Activated CD4-positive, alpha-beta T cell treated with anti-CD3 and anti-CD28 coated beads for 36 hours (primary cell): ENCODE measurements at regions of chr12 and their contacts with region 1.

Region 1: DNA sequence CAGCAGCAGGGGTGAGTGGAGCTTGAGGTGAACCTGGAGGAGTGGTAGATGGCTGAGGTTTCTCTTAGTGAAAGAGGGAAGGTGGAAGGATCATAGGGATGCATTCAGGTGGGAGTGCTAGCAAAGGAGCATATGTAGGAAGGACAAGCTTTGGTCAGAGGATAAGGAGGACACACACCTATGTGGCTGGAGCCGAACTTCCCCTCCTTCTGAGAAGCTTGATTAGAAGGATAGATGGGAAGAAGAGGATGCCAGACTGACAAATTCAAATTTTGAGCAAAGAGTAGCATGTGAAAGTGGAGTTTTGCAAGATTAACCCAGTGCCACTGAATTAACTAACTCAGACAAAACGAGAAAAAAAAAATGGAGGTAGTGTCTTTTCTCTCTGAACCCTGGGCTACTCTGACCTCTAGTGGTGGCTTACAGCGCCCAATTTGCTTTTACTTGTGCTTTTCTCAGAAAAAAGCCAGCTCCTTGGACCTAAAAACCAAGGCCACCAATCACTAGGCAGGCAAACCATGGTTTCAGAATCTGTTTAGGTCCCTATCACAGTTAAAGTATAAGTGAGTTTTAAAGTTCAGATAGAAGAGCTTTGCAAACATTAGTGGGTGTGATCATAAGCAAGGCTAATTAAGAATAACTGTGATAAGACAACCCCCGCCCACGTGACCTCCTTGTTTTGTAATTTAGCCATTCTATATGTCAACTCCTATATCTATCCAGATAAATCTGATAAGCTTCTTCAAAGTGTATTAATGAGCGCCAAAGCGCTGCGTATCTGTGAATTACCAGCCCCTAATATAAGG is 15.5 kb downstream of the EMP1 start:
- DNase-seq: peak; percentile 84
- ATAC-seq: peak; percentile 59
- H3K4me3 Mint-ChIP-seq: no peak overlapping the region
- H3K27ac Mint-ChIP-seq: peak overlapping the region; percentile 49
- H3K4me1 Mint-ChIP-seq: peaks cover 29% of the 10 kb centered on the region
- H3K27me3 Mint-ChIP-seq: no peaks in the 10 kb centered on the region

Region 2: DNA sequence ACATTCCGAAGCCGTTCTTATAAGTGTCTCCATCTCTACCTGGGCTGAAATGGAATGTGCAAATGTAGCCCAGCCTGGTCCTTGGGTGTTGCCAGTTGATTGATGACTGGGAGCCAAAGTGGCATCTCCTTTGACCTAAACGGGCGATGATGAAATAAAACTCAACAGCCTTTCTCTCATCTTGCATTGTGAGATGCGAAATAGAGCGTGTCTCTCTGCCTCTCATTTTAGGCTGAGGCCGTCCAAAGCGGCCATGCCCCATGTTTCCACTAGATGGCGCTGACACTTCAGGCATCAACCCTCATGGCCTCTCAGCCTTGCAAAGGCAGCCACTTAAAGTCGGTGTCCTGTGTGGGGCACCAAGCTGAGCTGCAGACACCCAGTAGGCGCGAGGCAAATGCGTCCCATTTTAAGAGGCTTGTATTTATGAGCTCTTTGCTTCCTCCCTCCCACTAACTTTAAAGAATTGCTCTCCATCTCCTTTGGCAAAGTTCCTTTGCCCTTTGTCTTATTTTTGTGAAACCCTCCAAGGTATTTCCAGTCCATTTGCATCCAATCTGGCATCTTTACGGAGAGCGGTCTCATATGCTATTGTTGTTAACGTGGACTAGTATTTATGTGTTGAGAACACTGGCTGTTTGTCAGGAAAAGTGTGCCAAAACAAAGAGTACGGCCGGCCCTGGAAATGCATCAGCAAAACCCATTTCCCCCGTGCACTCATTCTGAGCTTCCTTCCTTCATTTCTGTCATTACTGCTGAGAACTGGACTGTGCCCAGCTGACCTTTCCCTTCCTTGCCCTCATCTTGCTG is 295.7 kb before region 1 on chr12:
- CTCF ChIA-PET with region 1: interaction called, 56 read pairs
- POLR2A ChIA-PET with region 1: no interaction called
- intact Hi-C with region 1: loop called (anchors 1 kb)
- DNase-seq: peak; percentile 91
- ATAC-seq: peak; percentile 97
- H3K4me3 Mint-ChIP-seq: no peak overlapping the region
- H3K27ac Mint-ChIP-seq: no peak overlapping the region
- H3K4me1 Mint-ChIP-seq: peaks cover 7% of the 10 kb centered on the region
- H3K27me3 Mint-ChIP-seq: peaks cover 12% of the 10 kb centered on the region

Region 3: GRCh38 chr12:13044002-13044905 is 167.8 kb before region 1 on chr12 and contains the start of gene FAM234B:
- CTCF ChIA-PET with region 1: interaction called, 13 read pairs
- POLR2A ChIA-PET with region 1: interaction called, 7 read pairs
- intact Hi-C with region 1: loop called (anchors 2 to 5 kb)
- DNase-seq: peak; percentile 85
- ATAC-seq: peak; percentile 88
- H3K4me3 Mint-ChIP-seq: peak within 1 kb of the TSS; percentile 83
- H3K27ac Mint-ChIP-seq: peak within 1 kb of the TSS; percentile 77
- H3K4me1 Mint-ChIP-seq: peaks cover 27% of the 10 kb centered on the region
- H3K27me3 Mint-ChIP-seq: peaks cover 5% of the 10 kb centered on the region
- total RNA-seq, gene FAM234B: 11.1 to 12.2 TPM

Region 4: DNA sequence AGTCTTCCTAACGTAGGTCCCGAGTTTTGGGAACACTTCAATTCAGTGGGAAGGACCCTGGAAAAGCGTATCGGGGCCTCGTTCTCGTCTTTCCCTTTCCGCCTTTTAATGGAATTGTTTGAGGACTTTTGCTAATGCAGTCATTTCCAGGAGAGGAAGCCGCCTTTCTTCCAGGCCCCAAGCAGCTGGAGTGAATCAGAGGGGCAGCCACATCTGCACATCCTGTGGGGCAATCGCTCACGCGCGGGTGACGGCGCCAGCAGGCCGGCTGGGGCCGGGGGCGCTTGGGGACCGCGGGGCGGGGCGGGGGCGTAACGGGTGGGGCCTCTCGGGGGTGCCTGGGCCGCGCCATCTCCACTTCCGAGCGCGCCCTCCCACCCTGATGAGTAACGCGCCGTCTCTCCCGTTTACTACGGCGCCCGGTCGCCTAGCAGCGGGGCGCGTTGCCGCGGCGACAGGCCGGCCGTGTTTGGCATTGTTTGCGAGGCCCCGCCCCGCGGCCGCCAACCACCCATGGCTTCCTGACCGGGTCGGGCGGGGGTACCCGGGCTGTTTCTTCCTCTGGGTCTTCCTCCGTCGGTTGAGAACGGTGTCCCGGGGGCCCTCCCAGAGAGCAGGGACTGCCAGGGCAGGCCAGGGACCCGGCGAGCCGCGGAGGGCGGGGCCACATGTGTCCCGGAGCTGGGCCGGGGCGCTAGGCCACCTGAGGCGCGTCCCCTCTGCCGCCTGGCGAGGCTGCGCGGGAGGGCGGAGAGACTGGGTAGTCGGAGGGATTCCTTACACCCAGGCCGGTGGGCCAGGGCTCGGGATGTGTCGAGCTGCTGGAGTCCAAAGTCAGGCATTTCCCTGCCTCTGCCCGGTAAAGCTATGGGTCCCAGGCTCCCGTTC is 110.9 kb before region 1 on chr12:
- CTCF ChIA-PET with region 1: interaction called, 145 read pairs
- POLR2A ChIA-PET with region 1: interaction called, 4 read pairs
- intact Hi-C with region 1: loop called (anchors 1 kb)
- DNase-seq: peak; percentile 93
- ATAC-seq: peak; percentile 70
- H3K4me3 Mint-ChIP-seq: peak overlapping the region; percentile 63
- H3K27ac Mint-ChIP-seq: peak overlapping the region; percentile 72
- H3K4me1 Mint-ChIP-seq: peaks cover 58% of the 10 kb centered on the region
- H3K27me3 Mint-ChIP-seq: no peaks in the 10 kb centered on the region